ENCODE measurements at regions of chr20 and their contacts with region 1.

Region 1: GRCh38 chr20:11544029-11544678 is 373.5 kb upstream of the BTBD3 start:
- DNase-seq: peak; percentile 32
- H3K4me3 Mint-ChIP-seq: no peak overlapping the region
- H3K27ac Mint-ChIP-seq: no peak overlapping the region
- H3K4me1 Mint-ChIP-seq: peaks cover 6% of the 10 kb centered on the region
- H3K27me3 Mint-ChIP-seq: no peaks in the 10 kb centered on the region
- CTCF ChIP-seq: no peak

Region 2: DNA sequence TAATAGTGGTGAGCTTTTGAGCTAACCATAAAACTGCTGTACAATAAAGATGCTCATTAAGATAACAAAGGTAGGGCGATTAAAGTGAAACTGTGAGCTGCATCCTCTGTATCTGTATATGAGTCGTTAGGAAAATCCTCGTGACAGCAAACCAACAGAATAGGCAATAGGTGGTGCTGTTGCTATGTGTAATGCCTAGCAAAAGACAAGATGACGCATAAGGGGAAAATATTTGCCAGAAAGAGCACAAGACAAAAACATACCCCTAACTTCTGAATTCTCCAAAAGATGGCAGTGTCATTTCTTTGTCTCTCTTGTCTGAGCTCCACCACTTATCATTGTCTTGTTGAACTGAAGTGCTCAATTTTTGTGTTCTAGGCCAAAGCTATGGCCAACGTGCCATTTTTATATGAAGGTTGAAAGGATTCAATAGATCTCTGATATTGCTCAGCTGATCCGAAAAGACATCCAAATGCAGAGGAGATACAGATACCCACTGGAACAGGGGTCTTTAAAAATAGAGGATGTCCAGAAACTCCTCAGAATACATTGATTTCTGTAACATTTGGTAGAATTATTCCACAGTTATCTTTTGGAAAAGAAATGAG is 1565.7 kb before region 1 on chr20:
- CTCF ChIA-PET with region 1: no interaction called
- intact Hi-C with region 1: loop called (anchors 10 kb)
- DNase-seq: peak; percentile 35
- H3K4me3 Mint-ChIP-seq: no peak overlapping the region
- H3K27ac Mint-ChIP-seq: no peak overlapping the region
- H3K4me1 Mint-ChIP-seq: no peaks in the 10 kb centered on the region
- H3K27me3 Mint-ChIP-seq: peaks cover 12% of the 10 kb centered on the region
- CTCF ChIP-seq: peak; percentile 35

Region 3: DNA sequence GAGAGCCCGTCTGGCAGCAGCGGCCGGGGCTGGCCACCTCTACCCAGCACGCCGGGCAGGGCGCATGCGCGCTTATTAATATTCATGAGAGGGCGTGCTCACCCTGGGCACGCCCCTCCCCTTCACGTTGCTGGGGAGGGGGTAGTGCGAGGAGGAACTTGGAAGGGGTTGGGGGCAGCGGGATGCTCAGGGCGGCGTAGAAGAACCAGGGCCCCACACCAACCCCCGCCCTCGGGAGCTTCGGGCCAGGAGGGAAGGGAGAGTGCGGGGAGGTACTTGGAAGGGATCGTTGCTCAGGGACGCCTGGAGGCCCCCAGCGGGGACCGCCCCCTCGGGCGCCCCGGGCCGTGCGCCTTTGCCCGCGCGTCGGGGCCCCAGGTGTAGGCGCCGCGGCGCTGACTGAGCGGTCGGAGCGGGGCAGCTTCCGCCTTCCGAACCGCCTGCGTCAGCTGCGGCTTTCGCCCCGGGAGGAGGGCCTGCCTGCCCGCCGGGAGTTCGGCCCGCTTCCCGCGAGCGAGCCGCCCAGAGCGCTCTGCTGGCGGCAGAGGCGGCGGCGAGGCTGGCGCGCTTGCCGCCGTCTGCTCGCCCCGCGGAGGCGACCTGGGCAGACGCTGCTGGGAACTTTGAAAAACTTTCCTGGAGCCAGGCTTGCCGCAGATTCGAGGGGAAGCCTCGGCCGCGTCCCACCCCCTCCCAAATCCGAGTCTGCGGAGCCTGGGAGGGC is 870.0 kb before region 1 on chr20 and contains the start of gene JAG1:
- CTCF ChIA-PET with region 1: no interaction called
- intact Hi-C with region 1: loop called (anchors 10 kb)
- DNase-seq: peak; percentile 95
- H3K4me3 Mint-ChIP-seq: peak within 1 kb of the TSS; percentile 82
- H3K27ac Mint-ChIP-seq: peak within 1 kb of the TSS; percentile 93
- H3K4me1 Mint-ChIP-seq: peaks cover 19% of the 10 kb centered on the region
- H3K27me3 Mint-ChIP-seq: no peaks in the 10 kb centered on the region
- CTCF ChIP-seq: no peak
- total RNA-seq, gene JAG1: 156 and 245 TPM in 2 replicates

Region 4: GRCh38 chr20:11379257-11380011 is 164.7 kb before region 1 on chr20:
- CTCF ChIA-PET with region 1: no interaction called
- intact Hi-C with region 1: loop called (anchors 10 kb)
- DNase-seq: no peak
- H3K4me3 Mint-ChIP-seq: no peak overlapping the region
- H3K27ac Mint-ChIP-seq: no peak overlapping the region
- H3K4me1 Mint-ChIP-seq: peaks cover 39% of the 10 kb centered on the region
- H3K27me3 Mint-ChIP-seq: no peaks in the 10 kb centered on the region
- CTCF ChIP-seq: no peak